ENCODE measurements at regions of chr1 and their contacts with region 1.

Region 1: GRCh38 chr1:113881661-113882060 is 5.7 kb downstream of the BCL2L15 start:
- DNase-seq: no peak
- ATAC-seq: no peak
- H3K4me3 Mint-ChIP-seq: no peak overlapping the region
- H3K27ac Mint-ChIP-seq: no peak overlapping the region
- H3K4me1 Mint-ChIP-seq: peaks cover 33% of the 10 kb centered on the region
- H3K27me3 Mint-ChIP-seq: no peaks in the 10 kb centered on the region

Region 2: GRCh38 chr1:113545626-113546025 is 336.0 kb before region 1 on chr1:
- POLR2A ChIA-PET with region 1: no interaction called
- DNase-seq: no peak
- ATAC-seq: no peak
- H3K4me3 Mint-ChIP-seq: no peak overlapping the region
- H3K27ac Mint-ChIP-seq: no peak overlapping the region
- H3K4me1 Mint-ChIP-seq: no peaks in the 10 kb centered on the region
- H3K27me3 Mint-ChIP-seq: peaks cover 5% of the 10 kb centered on the region

Region 3: DNA sequence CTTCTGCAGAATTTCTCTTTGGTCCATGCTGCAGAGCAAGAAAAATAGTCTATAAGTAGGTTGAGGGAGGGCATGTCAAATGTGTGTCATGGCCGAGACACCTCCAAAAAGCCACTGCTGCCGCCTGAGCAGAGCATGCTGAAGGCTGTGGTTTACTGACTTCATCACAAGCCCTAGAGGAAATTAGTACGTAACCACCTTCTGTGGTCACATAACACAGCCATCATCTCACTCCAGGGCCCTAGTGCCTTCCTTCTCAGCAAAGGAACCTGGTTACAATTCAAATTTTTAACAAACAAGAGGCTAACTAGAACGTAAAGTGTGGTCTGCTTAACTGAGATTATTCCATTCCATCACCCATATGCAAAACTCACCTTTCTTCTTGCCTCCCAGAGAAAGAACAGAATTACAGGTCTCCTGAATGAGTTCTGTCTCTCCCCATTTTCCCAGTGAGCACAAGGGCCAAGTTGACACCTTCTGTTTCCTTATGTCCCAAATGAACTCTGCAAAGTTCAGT is 10.0 kb before region 1 on chr1 and contains the start of gene PTPN22:
- POLR2A ChIA-PET with region 1: interaction called, 24 read pairs
- DNase-seq: peak; percentile 71
- ATAC-seq: peak; percentile 80
- H3K4me3 Mint-ChIP-seq: peak within 1 kb of the TSS; percentile 88
- H3K27ac Mint-ChIP-seq: peak within 1 kb of the TSS; percentile 96
- H3K4me1 Mint-ChIP-seq: peaks cover 53% of the 10 kb centered on the region
- H3K27me3 Mint-ChIP-seq: no peaks in the 10 kb centered on the region
- total RNA-seq, gene PTPN22: 74.1 to 82.9 TPM